ENCODE measurements at regions of chr3 and their contacts with region 1.

Region 1: GRCh38 chr3:71875461-71875947 is 90.6 kb upstream of the PROK2 start:
- DNase-seq: peak; percentile 54 to 88 (median 82)
- H3K4me3 ChIP-seq: no peak overlapping the region
- H3K27ac ChIP-seq: peak overlapping the region in 2 of 59 donors; percentile 5 to 15
- H3K27me3 ChIP-seq: peaks cover 0 to 4% (median 0%) of the 10 kb centered on the region in 45 donors
- CTCF ChIP-seq: peak; percentile 71 to 97 (median 91)

Region 2: GRCh38 chr3:71942432-71943187 is 67.1 kb after region 1 on chr3:
- intact Hi-C with region 1: no loop called
- DNase-seq: no peak
- H3K4me3 ChIP-seq: no peak overlapping the region
- H3K27ac ChIP-seq: no peak overlapping the region
- H3K27me3 ChIP-seq: peaks cover 0 to 6% (median 0%) of the 10 kb centered on the region in 45 donors
- CTCF ChIP-seq: no peak

Region 3: DNA sequence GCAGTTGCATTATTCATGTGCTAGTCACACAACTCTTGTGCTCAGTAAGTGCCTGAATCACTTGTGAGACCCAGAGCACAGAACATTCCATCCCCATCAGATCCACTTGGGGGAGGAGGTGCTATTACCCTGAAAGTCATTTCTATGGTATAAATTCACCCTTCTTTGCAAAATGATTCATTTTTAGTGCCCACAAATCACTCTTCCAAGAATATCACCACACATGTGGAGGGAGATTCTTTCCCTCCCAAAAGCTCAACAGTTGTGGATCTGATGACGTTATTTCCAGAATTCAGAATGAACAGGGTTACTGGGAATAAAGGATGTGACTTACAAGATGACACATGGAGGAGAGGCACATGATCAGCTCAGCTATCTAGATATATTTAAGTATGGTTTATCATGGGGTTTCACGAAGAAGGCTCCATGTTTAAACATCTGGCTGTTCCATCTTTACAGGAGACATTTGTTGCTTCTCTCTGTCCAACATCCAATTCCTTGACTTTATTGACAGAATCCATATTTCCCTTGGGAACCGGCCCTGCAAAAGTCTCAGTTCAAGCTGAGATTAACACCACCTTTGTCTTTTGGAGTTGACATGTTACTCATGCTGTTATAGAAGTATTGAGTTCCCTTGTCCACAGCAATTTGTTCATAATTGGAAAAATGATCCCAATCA is 123.6 kb after region 1 on chr3:
- intact Hi-C with region 1: no loop called
- DNase-seq: peak in 1 of 10 donors; percentile 47
- H3K4me3 ChIP-seq: no peak overlapping the region
- H3K27ac ChIP-seq: no peak overlapping the region
- H3K27me3 ChIP-seq: peaks cover 0 to 3% (median 0%) of the 10 kb centered on the region in 45 donors
- CTCF ChIP-seq: no peak

Region 4: GRCh38 chr3:72102112-72102616 is 226.7 kb after region 1 on chr3:
- intact Hi-C with region 1: no loop called
- DNase-seq: no peak
- H3K4me3 ChIP-seq: no peak overlapping the region
- H3K27ac ChIP-seq: no peak overlapping the region
- H3K27me3 ChIP-seq: peaks cover 0 to 6% (median 0%) of the 10 kb centered on the region in 45 donors
- CTCF ChIP-seq: no peak

Region 5: DNA sequence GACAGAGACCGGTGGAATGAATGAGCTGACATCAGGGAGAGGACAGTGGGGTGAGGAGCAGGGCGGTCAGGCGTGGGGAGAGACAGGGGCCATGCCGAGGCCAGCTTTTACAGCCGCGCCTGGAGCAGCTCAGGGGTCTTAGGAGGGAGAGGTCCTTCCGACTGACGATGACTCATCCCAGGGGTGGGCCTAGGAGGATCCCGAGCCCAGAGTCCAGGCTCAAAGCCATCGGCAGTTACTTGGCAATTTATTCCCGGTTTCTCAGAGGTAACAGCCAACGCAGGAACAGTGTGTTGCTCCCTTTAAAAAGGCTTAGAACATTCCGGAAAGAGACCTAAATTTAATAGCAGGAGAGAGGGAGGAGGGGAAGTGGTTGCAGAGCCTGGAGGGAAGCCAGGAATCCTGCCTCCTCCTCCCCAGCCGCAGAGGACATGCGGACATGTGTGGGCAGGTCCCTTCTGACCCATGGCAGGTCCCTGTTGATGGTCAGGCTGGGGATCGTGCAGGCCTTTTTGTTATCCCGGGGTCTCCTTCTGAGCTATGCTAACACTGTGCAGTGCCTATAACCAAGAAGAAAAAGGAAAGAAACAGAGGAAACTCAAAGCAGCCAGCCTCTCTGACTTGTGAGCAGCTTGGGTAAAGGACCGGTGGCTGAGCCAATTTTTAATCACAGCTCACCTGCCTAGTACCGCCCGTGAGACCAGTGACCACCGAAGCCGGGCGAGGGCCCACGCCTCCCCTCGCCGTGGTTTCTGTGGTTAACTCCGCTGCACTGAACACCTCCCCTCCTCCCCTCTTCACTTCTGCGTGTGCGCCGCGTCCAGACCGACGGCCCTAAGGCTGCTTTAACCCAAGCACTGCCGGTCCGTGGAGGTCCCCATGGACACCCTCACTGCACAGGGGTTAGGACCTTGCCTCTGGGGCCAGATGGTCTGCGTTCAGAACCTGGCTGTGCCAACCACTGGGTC is 301.9 kb after region 1 on chr3:
- intact Hi-C with region 1: loop called in 1 of 2 experiments (anchors 10 kb)
- DNase-seq: peak in 5 of 10 donors; percentile 34 to 52 (median 48)
- H3K4me3 ChIP-seq: peak overlapping the region in 52 of 59 donors; percentile 3 to 54 (median 31)
- H3K27ac ChIP-seq: peak overlapping the region in 55 of 59 donors; percentile 0 to 99 (median 71)
- H3K27me3 ChIP-seq: no peaks in the 10 kb centered on the region
- CTCF ChIP-seq: no peak

Region 6: GRCh38 chr3:72473156-72473555 is 597.7 kb after region 1 on chr3:
- intact Hi-C with region 1: no loop called
- DNase-seq: no peak
- H3K4me3 ChIP-seq: no peak overlapping the region
- H3K27ac ChIP-seq: no peak overlapping the region
- H3K27me3 ChIP-seq: peaks cover 0 to 5% (median 0%) of the 10 kb centered on the region in 45 donors
- CTCF ChIP-seq: no peak

Region 7: GRCh38 chr3:72665701-72666443 is 790.4 kb after region 1 on chr3:
- intact Hi-C with region 1: loop called in 1 of 2 experiments (anchors 10 kb)
- DNase-seq: no peak
- H3K4me3 ChIP-seq: no peak overlapping the region
- H3K27ac ChIP-seq: peak overlapping the region in 15 of 59 donors; percentile 2 to 99 (median 97)
- H3K27me3 ChIP-seq: peaks cover 0 to 9% (median 0%) of the 10 kb centered on the region in 45 donors
- CTCF ChIP-seq: peak; percentile 17 to 67 (median 52)